ENCODE measurements at regions of chr19 and their contacts with region 1.

Region 1: DNA sequence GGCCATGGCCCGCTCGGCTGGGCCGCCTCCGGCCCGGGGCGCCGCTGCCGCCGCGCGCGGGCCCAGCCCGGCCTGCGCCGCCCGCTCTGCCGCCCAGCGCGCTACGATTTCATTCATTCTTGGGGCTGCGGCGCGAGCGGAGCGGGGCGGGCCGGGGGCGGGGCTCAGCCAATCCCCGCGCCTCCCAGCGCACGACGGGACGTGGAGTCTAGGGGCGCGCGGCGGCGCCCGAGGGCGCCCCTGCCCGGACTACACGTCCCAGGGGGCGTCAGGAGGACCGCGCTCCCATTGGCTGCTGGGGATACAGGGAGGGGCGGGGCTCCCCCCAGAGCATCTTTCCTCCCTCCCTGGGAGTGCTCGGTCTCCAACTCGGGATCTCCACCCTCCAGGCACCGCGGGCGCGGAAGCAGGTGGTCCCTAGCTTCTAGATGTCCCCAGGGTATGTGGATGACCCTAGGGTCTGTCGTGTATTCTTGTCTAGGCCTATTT is 5.6 kb upstream of the DPF1 start:
- DNase-seq: no peak

Region 2: GRCh38 chr19:37899966-37900365 is 329.7 kb before region 1 on chr19:
- intact Hi-C with region 1: loop called (anchors 2 kb)
- DNase-seq: no peak

Region 3: DNA sequence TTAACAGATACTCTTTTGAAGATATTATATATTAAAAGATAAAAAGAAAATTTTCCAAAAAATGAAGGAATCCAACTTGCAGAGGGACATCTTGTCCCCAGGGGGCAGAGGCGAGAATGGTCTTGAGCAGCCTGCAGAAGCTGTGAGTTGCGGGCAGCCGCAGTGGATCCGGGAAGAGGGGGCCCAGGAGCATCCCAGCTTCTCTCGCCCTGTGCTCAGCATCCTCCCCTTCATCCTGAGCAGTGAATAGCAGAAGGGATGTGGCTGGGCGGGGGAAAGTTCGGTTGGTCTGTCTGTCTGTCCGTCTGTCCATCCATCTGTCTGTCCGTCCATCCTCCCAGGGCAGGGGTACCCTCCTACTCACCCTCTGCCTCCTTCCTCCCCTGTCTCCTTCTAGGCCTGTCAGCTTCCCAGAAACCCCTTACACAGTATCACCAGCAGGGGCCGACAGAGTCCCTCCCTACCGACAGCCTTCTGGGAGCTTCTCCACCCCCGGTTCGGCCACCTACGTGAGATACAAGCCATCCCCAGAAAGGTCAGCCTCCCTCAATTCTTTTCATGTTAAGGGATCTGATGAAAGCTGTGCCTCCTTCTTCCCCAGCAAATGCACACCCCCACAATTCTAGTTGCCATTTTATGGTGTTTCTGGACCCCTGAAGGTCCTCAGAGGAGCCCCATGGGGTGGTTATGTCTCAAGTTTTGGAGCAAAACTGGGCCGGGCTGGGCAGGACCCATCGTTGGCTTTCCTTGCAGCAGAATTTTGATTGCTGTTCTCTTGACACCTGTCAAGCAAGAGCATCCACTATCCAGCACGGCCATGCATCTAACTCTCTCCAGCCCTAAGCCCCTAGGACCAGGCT is 87.2 kb before region 1 on chr19:
- intact Hi-C with region 1: loop called (anchors 5 kb)
- DNase-seq: no peak

Measured in cardiac septum (tissue), 1 donor.